Breast epithelium (tissue), 4 donors: ENCODE measurements at regions of chr11 and their contacts with region 1.

Region 1: DNA sequence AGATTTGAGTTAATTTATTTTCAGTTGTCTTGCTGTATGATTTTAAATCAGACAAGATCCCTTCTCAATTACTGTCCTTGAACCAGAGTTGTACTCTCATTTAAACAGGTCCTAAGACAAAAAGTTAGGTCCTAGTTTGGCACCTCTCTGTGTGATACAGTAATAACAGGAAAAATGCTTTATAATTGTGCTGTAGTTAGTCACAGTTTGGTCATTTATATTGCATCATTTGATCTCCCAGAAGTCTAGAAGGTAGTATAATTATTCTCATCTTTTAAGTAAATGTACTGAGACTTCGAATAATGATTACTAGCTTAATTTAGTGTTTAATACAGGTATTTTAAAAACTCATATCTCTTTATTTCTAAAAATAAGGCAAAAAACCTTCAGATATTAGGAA is 18.1 kb upstream of the LUZP2 start:
- DNase-seq: no peak
- H3K4me3 ChIP-seq: no peak overlapping the region
- H3K27ac ChIP-seq: no peak overlapping the region
- H3K4me1 ChIP-seq: no peaks in the 10 kb centered on the region
- H3K27me3 ChIP-seq: no peaks in the 10 kb centered on the region
- CTCF ChIP-seq: no peak
- POLR2A ChIP-seq: no peak

Region 2: GRCh38 chr11:24422376-24422775 is 56.3 kb before region 1 on chr11:
- intact Hi-C with region 1: no loop called
- DNase-seq: no peak
- H3K4me3 ChIP-seq: no peak overlapping the region
- H3K27ac ChIP-seq: no peak overlapping the region
- H3K4me1 ChIP-seq: no peaks in the 10 kb centered on the region
- H3K27me3 ChIP-seq: no peaks in the 10 kb centered on the region
- CTCF ChIP-seq: no peak
- POLR2A ChIP-seq: no peak

Region 3: GRCh38 chr11:24453129-24453723 is 25.5 kb before region 1 on chr11:
- intact Hi-C with region 1: no loop called
- DNase-seq: no peak
- H3K4me3 ChIP-seq: no peak overlapping the region
- H3K27ac ChIP-seq: no peak overlapping the region
- H3K4me1 ChIP-seq: no peaks in the 10 kb centered on the region
- H3K27me3 ChIP-seq: no peaks in the 10 kb centered on the region
- CTCF ChIP-seq: no peak
- POLR2A ChIP-seq: no peak

Region 4: DNA sequence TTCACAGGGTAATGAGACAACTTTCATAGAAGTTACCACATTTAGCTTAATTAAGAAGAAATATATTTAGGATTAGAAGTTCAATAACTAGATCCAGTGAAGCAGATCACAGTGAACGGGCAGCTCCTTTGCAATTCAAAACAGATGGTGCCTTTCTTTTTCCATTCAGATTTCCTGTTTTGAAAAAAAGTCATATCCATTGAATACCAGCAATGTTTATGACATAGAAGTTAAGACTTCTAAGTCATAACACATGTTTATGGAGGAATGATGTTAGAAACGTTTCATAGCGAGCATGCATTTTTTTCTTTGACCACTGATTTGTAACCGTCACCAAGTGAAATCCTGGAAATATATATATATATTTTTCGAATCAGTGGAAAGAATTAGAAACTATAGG is 42.9 kb after region 1 on chr11:
- intact Hi-C with region 1: loop called (anchors 2 kb)
- DNase-seq: no peak
- H3K4me3 ChIP-seq: no peak overlapping the region
- H3K27ac ChIP-seq: no peak overlapping the region
- H3K4me1 ChIP-seq: no peaks in the 10 kb centered on the region
- H3K27me3 ChIP-seq: no peaks in the 10 kb centered on the region
- CTCF ChIP-seq: no peak
- POLR2A ChIP-seq: no peak